Activated naive CD4-positive, alpha-beta T cell treated with anti-CD3 and anti-CD28 coated beads for 36 hours (primary cell): ENCODE measurements at regions of chr3 and their contacts with region 1.

Region 1: DNA sequence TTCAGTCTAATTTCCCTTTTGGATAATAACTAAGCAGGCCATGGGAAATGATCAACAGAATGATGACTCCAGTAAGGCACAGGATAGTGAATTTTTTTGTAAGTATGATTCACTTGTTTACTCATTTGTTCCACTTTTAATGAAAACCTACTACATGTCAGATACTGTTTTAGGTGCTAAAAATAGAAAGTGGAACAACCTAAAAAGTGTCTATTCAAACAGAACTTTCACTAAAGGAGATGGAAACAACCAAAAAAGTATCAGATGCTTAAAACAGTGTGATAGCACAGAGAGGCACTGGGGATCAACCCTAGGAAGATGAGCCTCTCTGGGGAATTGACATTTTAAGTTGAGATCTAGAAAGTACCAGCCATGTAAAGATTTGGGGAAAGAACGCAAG is 11.1 kb downstream of the RYK start:
- DNase-seq: peak; percentile 45
- H3K4me3 Mint-ChIP-seq: peak overlapping the region; percentile 30
- H3K27ac Mint-ChIP-seq: peak overlapping the region; percentile 88
- H3K4me1 Mint-ChIP-seq: peaks cover 94% of the 10 kb centered on the region
- H3K27me3 Mint-ChIP-seq: no peaks in the 10 kb centered on the region

Region 2: GRCh38 chr3:133915685-133916658 is 323.6 kb before region 1 on chr3:
- CTCF ChIA-PET with region 1: no interaction called
- intact Hi-C with region 1: no loop called
- DNase-seq: no peak
- H3K4me3 Mint-ChIP-seq: no peak overlapping the region
- H3K27ac Mint-ChIP-seq: no peak overlapping the region
- H3K4me1 Mint-ChIP-seq: no peaks in the 10 kb centered on the region
- H3K27me3 Mint-ChIP-seq: peaks cover 12% of the 10 kb centered on the region

Region 3: DNA sequence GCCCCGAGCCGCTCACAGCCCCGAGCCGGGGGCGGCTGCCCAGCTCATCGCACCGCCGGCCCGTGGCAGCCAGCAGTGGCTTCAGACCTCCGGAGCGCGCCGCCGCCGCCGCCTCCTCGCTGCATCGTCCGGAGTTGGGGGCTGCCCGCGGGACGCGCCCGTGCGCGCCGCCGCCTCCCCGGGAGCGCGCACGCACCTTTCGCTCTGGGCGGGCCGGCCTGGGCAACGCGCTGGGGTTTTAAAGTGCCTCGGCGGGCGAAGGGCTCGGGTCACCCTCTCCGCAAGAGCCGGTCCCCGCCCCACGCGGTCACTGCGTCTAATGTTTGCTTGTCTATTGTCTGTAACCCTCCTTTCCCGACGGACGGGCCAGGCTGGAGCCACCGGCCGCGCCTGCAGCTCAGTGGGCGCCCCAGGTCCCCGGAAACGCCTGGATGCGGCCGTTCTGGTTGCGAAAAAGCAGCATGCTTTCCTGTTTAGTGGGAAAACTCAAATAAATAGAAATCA is 11.2 kb after region 1 on chr3 and contains the start of gene RYK:
- CTCF ChIA-PET with region 1: interaction called, 4 read pairs
- intact Hi-C with region 1: loop called (anchors 1 kb)
- DNase-seq: peak; percentile 70
- H3K4me3 Mint-ChIP-seq: peak within 1 kb of the TSS; percentile 95
- H3K27ac Mint-ChIP-seq: peak within 1 kb of the TSS; percentile 90
- H3K4me1 Mint-ChIP-seq: peaks cover 57% of the 10 kb centered on the region
- H3K27me3 Mint-ChIP-seq: no peaks in the 10 kb centered on the region
- total RNA-seq, gene RYK: 19.5 to 19.7 TPM

Region 4: DNA sequence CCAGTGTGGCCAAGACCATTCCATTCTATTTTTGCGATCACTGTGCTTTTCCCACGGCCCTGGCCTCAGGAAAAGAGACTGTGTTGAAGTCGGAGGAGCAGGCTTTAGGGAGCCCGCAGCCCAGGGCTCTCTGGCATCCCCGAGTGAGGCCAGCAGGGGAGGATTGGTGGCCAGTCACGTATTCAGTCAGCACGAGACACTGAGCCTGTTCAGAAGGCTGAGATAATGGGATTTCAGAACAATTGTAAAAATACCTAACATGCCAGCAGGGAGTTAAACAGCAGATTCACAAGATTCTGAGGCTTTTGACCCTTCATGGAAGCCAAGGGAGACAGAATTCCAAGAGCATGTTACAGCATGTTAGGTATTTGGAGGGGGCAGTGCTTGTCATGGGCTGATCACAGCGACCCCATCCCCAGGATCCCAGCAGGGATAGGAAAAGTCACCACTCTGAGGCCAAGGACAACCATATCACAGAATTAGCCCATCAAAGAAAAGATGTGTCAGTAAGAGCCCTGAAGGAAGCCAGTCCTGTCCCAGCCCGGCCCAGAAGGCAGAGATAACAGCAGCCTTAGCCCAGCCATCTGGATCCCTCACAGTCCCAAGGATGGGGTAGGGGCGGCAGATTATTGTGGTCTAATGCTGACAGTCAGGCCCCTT is 94.1 kb after region 1 on chr3:
- CTCF ChIA-PET with region 1: no interaction called
- intact Hi-C with region 1: no loop called
- DNase-seq: no peak
- H3K4me3 Mint-ChIP-seq: no peak overlapping the region
- H3K27ac Mint-ChIP-seq: no peak overlapping the region
- H3K4me1 Mint-ChIP-seq: no peaks in the 10 kb centered on the region
- H3K27me3 Mint-ChIP-seq: no peaks in the 10 kb centered on the region